Activated T-helper 1 cell treated with anti-CD3 and anti-CD28 coated beads, Interleukin-12 subunit alpha, Interleukin-12 subunit beta, Interleukin-2, Interleukin-4 antibody, amounts not matched to agents 30 ng/mL and 10 ng/mL and 1 ng/mL, durations not matched to agents 14 hours and 24 hours and 36 hours (primary cell): ENCODE measurements at regions of chr14 and their contacts with region 1.

Region 1: DNA sequence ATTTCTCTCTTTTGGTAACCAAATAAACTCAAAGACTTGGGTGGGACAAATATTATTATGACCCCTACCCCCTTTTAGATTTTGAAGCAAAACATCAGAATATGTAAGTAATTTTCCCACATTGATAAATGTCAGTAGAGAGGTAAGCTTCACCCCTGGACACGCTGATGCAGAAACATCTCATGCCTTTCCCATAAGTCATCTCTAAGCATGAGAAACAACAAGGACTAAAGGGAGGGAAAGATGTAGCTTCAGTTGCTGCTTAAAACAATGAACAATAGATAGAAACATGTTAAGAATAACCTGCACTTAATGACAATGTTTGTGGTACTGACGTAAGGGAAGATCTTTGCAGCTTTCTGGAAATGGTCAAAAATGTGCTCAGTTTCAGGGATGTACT is 56.3 kb upstream of the SLC8A3 start:
- DNase-seq: no peak
- H3K4me3 Mint-ChIP-seq: no peak overlapping the region
- H3K27ac Mint-ChIP-seq: no peak overlapping the region
- H3K4me1 Mint-ChIP-seq: no peaks in the 10 kb centered on the region
- H3K27me3 Mint-ChIP-seq: peaks cover 13% of the 10 kb centered on the region

Region 2: DNA sequence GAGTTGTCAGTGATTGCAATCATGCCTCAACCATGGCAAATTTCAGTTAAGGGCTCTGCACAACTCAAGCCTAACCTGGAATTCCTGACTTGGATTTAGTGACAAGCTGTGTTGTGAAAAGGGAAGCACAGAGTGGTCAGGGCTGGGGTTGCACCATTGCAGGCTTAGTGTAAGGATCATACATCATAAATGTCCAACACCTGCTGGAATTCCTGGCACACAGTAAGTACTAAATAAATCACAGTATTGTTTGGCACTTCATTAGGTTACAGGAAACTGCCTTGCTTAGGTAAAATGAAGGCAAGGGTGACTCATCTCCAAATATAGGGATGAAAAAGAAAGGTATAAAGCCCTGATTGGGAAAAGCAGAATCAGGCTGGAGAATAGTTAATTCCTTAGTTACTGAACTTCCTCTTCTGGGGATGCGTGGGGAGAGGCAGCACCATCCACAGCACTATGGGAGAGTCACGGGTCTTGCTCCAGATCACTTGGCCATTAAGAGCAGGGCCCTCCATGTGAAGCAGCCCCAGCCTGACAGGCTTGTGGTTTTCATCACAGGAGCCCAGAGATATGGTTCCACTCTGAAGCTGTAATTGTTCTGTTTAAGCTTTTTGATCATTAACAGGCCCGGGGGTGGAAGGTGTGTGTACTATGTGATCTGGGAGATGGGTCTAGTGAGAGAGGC is 96.0 kb before region 1 on chr14:
- intact Hi-C with region 1: no loop called
- DNase-seq: no peak
- H3K4me3 Mint-ChIP-seq: no peak overlapping the region
- H3K27ac Mint-ChIP-seq: no peak overlapping the region
- H3K4me1 Mint-ChIP-seq: no peaks in the 10 kb centered on the region
- H3K27me3 Mint-ChIP-seq: peaks cover 8% of the 10 kb centered on the region

Region 3: DNA sequence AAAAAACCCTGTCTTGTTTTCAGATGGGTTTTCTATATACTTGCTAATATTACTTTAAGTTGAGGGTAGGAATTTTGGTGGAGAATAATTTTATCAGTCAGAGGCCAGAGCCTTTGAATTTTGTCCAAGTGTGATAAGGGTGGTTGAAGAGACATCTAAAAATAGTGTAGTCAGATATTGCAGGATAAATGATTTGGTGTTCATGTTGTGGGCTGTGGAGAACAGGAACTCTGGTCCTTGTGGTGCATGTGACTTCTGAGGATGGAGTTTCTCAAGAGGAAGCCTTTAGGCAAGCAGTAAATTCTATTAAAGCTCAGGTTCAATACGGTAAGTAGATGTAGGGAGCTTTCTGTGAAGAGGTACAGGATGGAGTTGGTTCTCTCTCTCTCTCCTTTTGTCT is 209.7 kb after region 1 on chr14:
- intact Hi-C with region 1: loop called (anchors 5 kb)
- DNase-seq: no peak
- H3K4me3 Mint-ChIP-seq: no peak overlapping the region
- H3K27ac Mint-ChIP-seq: no peak overlapping the region
- H3K4me1 Mint-ChIP-seq: no peaks in the 10 kb centered on the region
- H3K27me3 Mint-ChIP-seq: peaks cover 5% of the 10 kb centered on the region